K562 (cell line): ENCODE measurements at regions of chr4 and their contacts with region 1.

Region 1: GRCh38 chr4:124459941-124460310 is 252.6 kb downstream of the ANKRD50 start:
- DNase-seq: no peak
- ATAC-seq: no peak
- H3K4me3 ChIP-seq: no peak overlapping the region
- H3K27ac ChIP-seq: no peak overlapping the region
- H3K4me1 ChIP-seq: no peaks in the 10 kb centered on the region
- H3K27me3 ChIP-seq: no peaks in the 10 kb centered on the region
- CTCF ChIP-seq: no peak
- EP300 ChIP-seq: no peak
- POLR2A ChIP-seq: no peak
- RAD21 ChIP-seq: no peak

Region 2: DNA sequence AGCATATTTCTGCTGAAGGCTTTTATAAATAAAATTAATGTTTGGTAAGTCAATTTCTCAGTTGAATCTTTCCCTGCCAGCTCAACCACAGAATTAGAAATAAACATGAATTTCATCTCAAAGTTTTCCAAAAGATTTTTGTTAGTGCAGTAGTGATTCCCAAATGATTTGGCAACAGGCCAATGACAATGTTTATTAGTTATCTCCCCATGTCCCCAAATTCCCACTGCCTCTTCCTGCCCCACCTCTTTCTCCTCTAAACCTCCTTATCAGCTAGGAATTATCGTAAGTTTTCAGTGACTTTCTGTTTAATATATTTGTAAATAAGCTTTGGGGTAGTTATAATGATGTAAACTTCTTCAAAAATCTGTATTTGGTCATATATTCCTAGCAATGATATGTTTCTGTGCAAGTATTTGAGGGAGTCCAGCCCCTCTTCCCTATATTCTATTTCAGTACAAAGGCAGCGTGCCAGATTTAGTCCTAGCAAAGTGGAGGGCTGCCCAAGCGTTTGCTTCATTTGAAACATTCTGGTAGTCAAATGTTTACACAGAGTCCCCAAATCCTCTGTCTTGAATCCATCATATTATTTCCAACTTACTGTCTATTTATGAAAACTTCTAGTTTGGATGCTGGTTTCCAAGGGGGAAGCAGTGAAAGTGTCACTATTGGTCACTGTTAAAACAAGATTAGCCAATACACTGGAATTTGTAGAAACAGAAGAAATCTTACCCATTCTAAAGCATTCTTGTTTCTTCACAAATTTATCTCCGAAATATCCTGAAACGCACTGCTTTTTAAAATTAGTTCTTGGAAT is 286.3 kb after region 1 on chr4:
- CTCF ChIA-PET with region 1: no interaction called
- POLR2A ChIA-PET with region 1: no interaction called
- in situ Hi-C with region 1: no loop called
- intact Hi-C with region 1: loop called (anchors 10 kb)
- DNase-seq: no peak
- ATAC-seq: no peak
- H3K4me3 ChIP-seq: no peak overlapping the region
- H3K27ac ChIP-seq: no peak overlapping the region
- H3K4me1 ChIP-seq: no peaks in the 10 kb centered on the region
- H3K27me3 ChIP-seq: peaks cover 0 to 5% of the 10 kb centered on the region in 2 experiments; a peak in 1 of 5 replicates
- CTCF ChIP-seq: no peak
- EP300 ChIP-seq: no peak
- POLR2A ChIP-seq: no peak
- RAD21 ChIP-seq: no peak